CD4-positive, alpha-beta T cell (primary cell): ENCODE measurements at regions of chr12 and their contacts with region 1.

Region 1: DNA sequence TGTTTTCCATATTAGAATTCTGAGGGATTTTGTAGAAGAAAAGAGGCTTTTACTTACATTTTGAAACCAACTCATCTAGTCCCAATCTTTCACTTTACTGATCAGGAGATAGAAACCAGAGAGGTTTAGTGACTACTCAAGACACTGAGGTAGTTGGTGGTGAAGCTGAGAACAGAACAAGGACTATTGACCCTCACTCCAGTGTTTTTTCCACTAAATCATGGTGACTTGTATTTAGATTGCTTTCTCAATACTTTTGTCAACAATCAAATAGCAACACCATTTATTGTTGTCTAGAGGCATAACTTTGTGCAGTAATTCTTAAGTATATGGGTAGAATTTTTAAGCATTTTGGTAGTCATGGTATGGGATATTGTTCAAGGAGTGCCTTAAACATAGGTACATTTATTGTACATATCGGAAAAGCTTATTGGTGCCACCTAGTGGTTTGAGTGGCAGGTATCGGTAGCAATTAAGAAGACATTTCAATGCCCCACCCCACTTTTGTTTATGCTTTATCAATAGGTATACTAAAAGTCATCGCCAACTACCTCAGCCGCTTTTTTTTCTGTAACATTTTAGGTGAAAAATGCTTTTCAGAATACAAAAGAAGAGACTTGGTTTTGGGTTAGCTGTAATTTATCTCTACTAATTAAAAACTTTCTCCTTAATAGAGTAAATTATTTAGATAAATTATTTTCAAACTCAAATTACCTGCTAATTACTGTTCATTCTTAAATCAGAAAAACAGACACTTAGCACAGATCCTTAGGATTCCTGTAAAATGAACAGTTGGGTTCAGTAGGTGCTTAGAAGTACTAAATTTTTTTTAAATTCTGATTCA is 47.3 kb upstream of the PAWR start:
- DNase-seq: peak in 4 of 14 experiments; percentile 20 to 61 (median 42)
- ATAC-seq: no peak
- H3K4me3 ChIP-seq: no peak overlapping the region
- H3K4me3 Mint-ChIP-seq: no peak overlapping the region
- H3K27ac ChIP-seq: no peak overlapping the region
- H3K27ac Mint-ChIP-seq: no peak overlapping the region
- H3K4me1 ChIP-seq: no peaks in the 10 kb centered on the region
- H3K4me1 Mint-ChIP-seq: no peaks in the 10 kb centered on the region
- H3K27me3 ChIP-seq: peaks cover 0 to 8% of the 10 kb centered on the region in 2 experiments
- H3K27me3 Mint-ChIP-seq: peaks cover 6% of the 10 kb centered on the region
- CTCF ChIP-seq: peak; percentile 77

Region 2: DNA sequence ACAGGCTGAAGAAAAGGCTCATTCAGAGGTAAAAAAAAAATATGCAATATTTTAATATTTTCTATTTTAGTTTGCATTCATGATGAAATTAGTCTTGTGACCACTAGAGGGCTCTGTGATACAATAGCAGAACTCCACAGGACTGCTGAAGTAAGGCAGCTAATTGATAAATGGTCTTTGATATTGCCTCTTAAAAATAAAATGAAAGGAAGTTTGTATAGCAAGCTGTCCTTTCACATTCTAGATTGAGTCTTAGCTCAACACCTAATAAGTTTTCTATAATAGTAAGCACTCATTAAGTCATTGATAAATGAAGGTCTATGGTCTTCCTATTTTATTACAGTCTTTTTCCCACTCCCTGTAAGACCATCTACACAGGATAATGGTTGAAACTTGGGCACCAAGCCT is 1591.7 kb before region 1 on chr12:
- CTCF ChIA-PET with region 1: no interaction called
- POLR2A ChIA-PET with region 1: no interaction called
- intact Hi-C with region 1: loop called in 1 of 2 experiments (anchors 10 kb)
- DNase-seq: peak in 1 of 14 experiments; percentile 4
- ATAC-seq: no peak
- H3K4me3 ChIP-seq: no peak overlapping the region
- H3K4me3 Mint-ChIP-seq: no peak overlapping the region
- H3K27ac ChIP-seq: no peak overlapping the region
- H3K27ac Mint-ChIP-seq: no peak overlapping the region
- H3K4me1 ChIP-seq: no peaks in the 10 kb centered on the region
- H3K4me1 Mint-ChIP-seq: no peaks in the 10 kb centered on the region
- H3K27me3 ChIP-seq: no peaks in the 10 kb centered on the region
- H3K27me3 Mint-ChIP-seq: no peaks in the 10 kb centered on the region
- CTCF ChIP-seq: peak; percentile 61

Region 3: GRCh38 chr12:79547735-79548609 is 190.1 kb before region 1 on chr12:
- CTCF ChIA-PET with region 1: no interaction called
- POLR2A ChIA-PET with region 1: no interaction called
- intact Hi-C with region 1: loop called in 1 of 2 experiments (anchors 2 kb)
- DNase-seq: peak in 4 of 14 experiments; percentile 6 to 30 (median 20)
- ATAC-seq: no peak
- H3K4me3 ChIP-seq: no peak overlapping the region
- H3K4me3 Mint-ChIP-seq: no peak overlapping the region
- H3K27ac ChIP-seq: no peak overlapping the region
- H3K27ac Mint-ChIP-seq: no peak overlapping the region
- H3K4me1 ChIP-seq: no peaks in the 10 kb centered on the region
- H3K4me1 Mint-ChIP-seq: no peaks in the 10 kb centered on the region
- H3K27me3 ChIP-seq: no peaks in the 10 kb centered on the region
- H3K27me3 Mint-ChIP-seq: no peaks in the 10 kb centered on the region
- CTCF ChIP-seq: peak; percentile 47